ENCODE measurements at regions of chr10 and their contacts with region 1.

Region 1: GRCh38 chr10:23994479-23995046 is 214.4 kb upstream of the KIAA1217 start:
- DNase-seq: peak; percentile 52
- H3K4me3 ChIP-seq: no peak overlapping the region; a peak in 1 of 4 replicates
- H3K27ac ChIP-seq: peak overlapping the region in 1 of 2 experiments; percentile 62; a peak in 1 of 4 replicates
- H3K4me1 ChIP-seq: peaks cover 0 to 3% of the 10 kb centered on the region in 2 experiments; a peak in 2 of 4 replicates
- H3K27me3 ChIP-seq: no peaks in the 10 kb centered on the region
- CTCF ChIP-seq: peak; percentile 90
- EP300 ChIP-seq: no peak
- RAD21 ChIP-seq: peak; percentile 92

Region 2: GRCh38 chr10:23918839-23919238 is 75.7 kb before region 1 on chr10:
- CTCF ChIA-PET with region 1: no interaction called
- POLR2A ChIA-PET with region 1: no interaction called
- DNase-seq: no peak
- H3K4me3 ChIP-seq: no peak overlapping the region
- H3K27ac ChIP-seq: no peak overlapping the region
- H3K4me1 ChIP-seq: peaks cover 0 to 7% of the 10 kb centered on the region in 2 experiments; a peak in 1 of 4 replicates
- H3K27me3 ChIP-seq: no peaks in the 10 kb centered on the region
- CTCF ChIP-seq: no peak
- EP300 ChIP-seq: no peak
- RAD21 ChIP-seq: no peak

Region 3: DNA sequence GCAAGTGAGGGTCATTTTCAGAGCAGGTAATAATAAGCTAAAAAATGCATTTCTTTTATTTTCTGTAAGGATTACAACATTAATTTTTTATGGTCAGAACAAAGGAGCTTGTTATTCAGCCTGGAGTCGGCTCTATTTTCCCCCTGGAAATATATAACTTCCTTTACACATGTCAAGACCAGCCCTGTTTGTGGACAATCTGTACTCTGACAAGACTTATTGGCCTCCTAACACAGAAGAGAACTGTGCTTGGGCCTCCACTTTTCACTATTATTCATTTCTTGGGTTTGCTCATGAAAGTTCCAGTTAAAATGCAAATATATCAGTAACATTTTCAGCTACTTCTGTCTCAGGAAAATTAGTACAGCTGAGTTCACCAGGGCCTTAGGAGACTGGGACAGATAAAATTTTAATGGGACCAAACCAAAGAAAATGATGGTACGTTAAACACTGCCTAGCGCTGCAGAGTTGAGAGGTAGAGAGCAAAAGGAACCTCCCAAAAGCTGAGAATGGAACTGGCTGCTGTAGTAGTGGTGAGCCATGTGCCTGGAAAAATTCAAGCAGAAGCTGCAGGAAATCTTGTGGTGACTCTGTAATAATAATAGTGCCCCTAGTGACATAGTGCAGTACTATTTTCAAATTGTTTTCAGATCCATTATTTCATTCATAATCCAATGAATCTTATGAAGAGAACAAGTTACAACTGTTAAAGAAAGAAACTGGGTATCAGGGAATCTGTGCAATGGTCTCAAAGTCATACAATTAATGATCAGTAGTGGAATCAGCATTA is 12.8 kb before region 1 on chr10:
- CTCF ChIA-PET with region 1: interaction called, 31 read pairs
- POLR2A ChIA-PET with region 1: no interaction called
- DNase-seq: peak; percentile 14
- H3K4me3 ChIP-seq: no peak overlapping the region
- H3K27ac ChIP-seq: no peak overlapping the region
- H3K4me1 ChIP-seq: no peaks in the 10 kb centered on the region
- H3K27me3 ChIP-seq: no peaks in the 10 kb centered on the region
- CTCF ChIP-seq: peak; percentile 36; the same call in 1 of the 2 replicates
- EP300 ChIP-seq: no peak
- RAD21 ChIP-seq: no peak

Region 4: GRCh38 chr10:24086296-24087086 is 91.9 kb after region 1 on chr10:
- CTCF ChIA-PET with region 1: no interaction called
- POLR2A ChIA-PET with region 1: no interaction called
- DNase-seq: no peak
- H3K4me3 ChIP-seq: no peak overlapping the region
- H3K27ac ChIP-seq: no peak overlapping the region
- H3K4me1 ChIP-seq: no peaks in the 10 kb centered on the region
- H3K27me3 ChIP-seq: no peaks in the 10 kb centered on the region
- CTCF ChIP-seq: no peak
- EP300 ChIP-seq: no peak
- RAD21 ChIP-seq: no peak

Region 5: DNA sequence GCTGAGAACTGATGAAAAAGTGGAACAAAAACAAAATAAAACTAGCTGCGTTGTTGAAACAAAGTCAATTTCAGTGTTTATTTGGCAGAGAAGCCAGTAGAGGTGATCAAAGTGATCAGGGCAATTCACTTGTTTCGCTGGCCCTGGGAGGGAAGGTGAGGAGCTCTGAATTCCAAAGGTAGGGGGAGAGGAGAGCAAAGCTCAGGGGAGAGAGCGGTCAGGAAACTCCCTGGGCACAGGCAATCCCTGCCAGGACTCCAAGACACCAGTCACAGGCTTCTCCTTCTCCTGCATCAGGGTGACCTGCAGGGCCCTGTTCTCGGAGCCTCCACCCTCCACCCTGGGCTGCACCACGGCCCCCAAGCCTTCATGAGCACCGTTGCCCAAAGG is 207.6 kb after region 1 on chr10:
- CTCF ChIA-PET with region 1: interaction called, 62 read pairs
- POLR2A ChIA-PET with region 1: no interaction called
- DNase-seq: no peak
- H3K4me3 ChIP-seq: no peak overlapping the region
- H3K27ac ChIP-seq: no peak overlapping the region
- H3K4me1 ChIP-seq: peaks cover under 1 to 16% of the 10 kb centered on the region in 2 experiments; a peak in 2 of 4 replicates
- H3K27me3 ChIP-seq: no peaks in the 10 kb centered on the region
- CTCF ChIP-seq: no peak
- EP300 ChIP-seq: no peak
- RAD21 ChIP-seq: no peak

Region 6: GRCh38 chr10:24360282-24361127 is 365.9 kb after region 1 on chr10:
- CTCF ChIA-PET with region 1: interaction called, 60 read pairs
- POLR2A ChIA-PET with region 1: no interaction called
- DNase-seq: peak; percentile 68
- H3K4me3 ChIP-seq: no peak overlapping the region; a peak in 1 of 4 replicates
- H3K27ac ChIP-seq: no peak overlapping the region
- H3K4me1 ChIP-seq: no peaks in the 10 kb centered on the region; a peak in 1 of 4 replicates
- H3K27me3 ChIP-seq: no peaks in the 10 kb centered on the region
- CTCF ChIP-seq: peak; percentile 86
- EP300 ChIP-seq: no peak
- RAD21 ChIP-seq: peak; percentile 91

Region 7: GRCh38 chr10:24503461-24504320 is 509.1 kb after region 1 on chr10:
- CTCF ChIA-PET with region 1: interaction called, 16 read pairs
- POLR2A ChIA-PET with region 1: no interaction called
- DNase-seq: peak; percentile 63
- H3K4me3 ChIP-seq: no peak overlapping the region; a peak in 1 of 4 replicates
- H3K27ac ChIP-seq: no peak overlapping the region
- H3K4me1 ChIP-seq: peaks cover 0 to 4% of the 10 kb centered on the region in 2 experiments; a peak in 2 of 4 replicates
- H3K27me3 ChIP-seq: no peaks in the 10 kb centered on the region
- CTCF ChIP-seq: peak; percentile 85
- EP300 ChIP-seq: no peak
- RAD21 ChIP-seq: peak; percentile 88

Region 8: DNA sequence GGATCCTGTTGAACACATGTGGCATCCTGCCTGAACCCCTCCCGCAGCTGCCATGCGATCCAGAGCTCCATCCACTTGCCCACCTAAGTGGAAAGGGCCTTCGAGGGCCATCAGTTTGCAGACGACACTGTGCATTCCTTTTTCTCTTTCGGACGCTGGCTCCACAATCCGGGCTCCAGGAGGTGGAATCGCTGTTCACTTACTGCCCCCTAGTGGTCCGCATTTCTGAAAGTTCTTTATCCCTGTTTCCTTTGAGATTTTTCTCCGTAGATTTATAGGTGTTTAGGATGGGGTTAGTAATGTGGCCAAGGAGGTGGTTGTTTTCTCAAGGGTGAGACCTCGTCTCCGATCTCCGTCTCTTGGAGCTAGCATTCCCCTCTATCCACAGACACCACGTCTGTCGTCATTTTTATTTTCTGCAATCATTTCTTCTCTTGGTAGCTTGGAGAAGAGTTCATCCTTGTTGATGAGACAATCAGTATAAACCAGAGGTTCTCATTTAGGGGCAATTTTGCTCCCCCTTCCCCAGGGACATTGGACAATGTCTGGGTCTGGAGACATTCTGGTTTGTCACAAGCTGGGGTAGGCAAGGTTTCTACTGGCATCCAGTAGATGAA is 524.5 kb after region 1 on chr10:
- CTCF ChIA-PET with region 1: interaction called, 69 read pairs
- POLR2A ChIA-PET with region 1: no interaction called
- DNase-seq: peak; percentile 76
- H3K4me3 ChIP-seq: peak overlapping the region in 1 of 2 experiments; percentile 10; a peak in 1 of 4 replicates
- H3K27ac ChIP-seq: no peak overlapping the region
- H3K4me1 ChIP-seq: peaks cover 0 to 3% of the 10 kb centered on the region in 2 experiments; a peak in 2 of 4 replicates
- H3K27me3 ChIP-seq: no peaks in the 10 kb centered on the region
- CTCF ChIP-seq: peak; percentile 89
- EP300 ChIP-seq: 0 out of 4 replicates have a peak, but pooled peaks of 1 of the 2 experiments have one; percentile 10
- RAD21 ChIP-seq: peak; percentile 87